ENCODE measurements at regions of chr9 and their contacts with region 1.

Region 1: DNA sequence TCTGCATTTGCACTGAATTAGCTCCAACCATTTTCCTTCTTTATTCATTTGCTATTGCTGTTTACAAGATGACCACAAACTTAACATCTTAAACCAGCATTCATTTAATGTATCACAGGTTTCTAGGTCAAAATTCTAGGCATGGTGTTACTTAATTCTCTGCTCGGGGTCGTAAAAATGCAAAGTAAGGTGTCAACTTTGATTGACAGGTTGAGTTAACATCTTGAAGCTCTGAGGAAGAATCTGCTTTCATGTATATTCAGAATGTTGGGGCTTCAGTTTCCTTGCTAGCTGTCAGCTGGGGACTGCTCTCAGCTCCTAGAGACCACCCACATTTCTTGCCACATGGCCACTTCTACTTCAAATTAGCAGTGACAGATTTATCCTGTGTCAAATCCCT is 348.7 kb upstream of the GRIN3A start:
- DNase-seq: no peak

Region 2: DNA sequence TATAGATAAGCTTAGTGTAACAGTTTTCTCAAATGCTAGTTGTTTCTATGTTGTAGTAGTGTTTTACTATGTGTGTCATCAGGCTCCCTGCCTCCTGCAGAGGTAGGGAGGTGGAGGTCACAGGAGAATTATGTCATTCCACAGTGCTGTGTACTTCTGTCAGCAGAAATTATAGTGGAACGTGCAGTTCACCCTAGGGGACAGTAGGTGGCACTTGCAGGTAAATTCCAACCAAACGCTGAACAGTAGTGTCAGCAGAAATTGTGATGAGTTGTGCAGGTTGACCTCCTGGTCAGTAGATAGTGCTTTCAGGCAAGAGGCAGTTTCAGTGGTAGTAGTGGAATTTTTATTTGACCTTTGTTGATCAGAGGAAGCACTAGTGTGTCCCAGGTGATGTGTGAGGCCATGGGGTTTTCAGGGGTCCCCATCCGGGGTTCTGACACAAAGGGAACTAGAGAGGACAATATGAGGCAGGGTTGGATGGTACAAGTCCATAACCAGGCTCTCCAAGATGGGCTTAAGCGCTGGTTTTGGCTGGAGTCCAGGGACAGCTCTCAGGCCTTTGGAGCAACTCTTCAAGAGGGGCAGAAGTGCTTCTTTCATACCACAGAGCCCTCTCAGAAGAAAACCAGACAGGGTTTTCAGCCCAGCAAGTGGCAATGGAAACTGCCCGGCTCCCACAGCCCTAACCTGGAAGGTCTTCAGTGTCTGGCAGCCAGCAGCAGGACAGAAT is 1310.9 kb after region 1 on chr9:
- intact Hi-C with region 1: loop called in 1 of 2 experiments (anchors 5 kb)
- DNase-seq: no peak